ENCODE measurements at regions of chr5 and their contacts with region 1.

Region 1: GRCh38 chr5:14560091-14560595 is 21.4 kb upstream of the OTULINL start:
- DNase-seq: no peak
- ATAC-seq: no peak
- H3K4me3 ChIP-seq: no peak overlapping the region
- H3K27ac ChIP-seq: peak overlapping the region in 1 of 10 donors; percentile 1
- H3K4me1 ChIP-seq: peaks cover 0 to 28% (median 0%) of the 10 kb centered on the region in 9 donors
- H3K27me3 ChIP-seq: peaks cover 0 to 9% (median 0%) of the 10 kb centered on the region in 7 donors
- CTCF ChIP-seq: no peak

Region 2: DNA sequence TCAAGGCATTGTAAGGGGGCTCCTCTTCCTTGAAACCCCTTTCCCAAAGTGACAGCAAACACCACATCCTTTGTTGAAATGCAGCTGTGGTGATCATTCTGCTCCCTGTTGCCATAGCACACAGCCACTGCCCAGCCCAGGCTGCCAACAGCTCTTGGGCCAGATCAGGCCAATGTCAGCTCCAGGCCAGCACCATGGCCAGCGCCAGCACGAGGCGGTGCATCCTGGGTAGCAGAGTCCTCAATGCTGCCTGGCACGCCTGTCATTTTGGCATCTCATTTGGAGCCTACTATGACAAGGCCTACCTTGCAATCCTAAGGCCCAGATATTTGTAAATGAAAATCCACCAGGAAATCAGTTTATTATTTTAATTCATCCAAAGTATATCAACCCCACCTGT is 1006.2 kb before region 1 on chr5:
- intact Hi-C with region 1: no loop called
- DNase-seq: no peak
- ATAC-seq: no peak
- H3K4me3 ChIP-seq: no peak overlapping the region
- H3K27ac ChIP-seq: no peak overlapping the region
- H3K4me1 ChIP-seq: no peaks in the 10 kb centered on the region
- H3K27me3 ChIP-seq: no peaks in the 10 kb centered on the region
- CTCF ChIP-seq: no peak

Region 3: DNA sequence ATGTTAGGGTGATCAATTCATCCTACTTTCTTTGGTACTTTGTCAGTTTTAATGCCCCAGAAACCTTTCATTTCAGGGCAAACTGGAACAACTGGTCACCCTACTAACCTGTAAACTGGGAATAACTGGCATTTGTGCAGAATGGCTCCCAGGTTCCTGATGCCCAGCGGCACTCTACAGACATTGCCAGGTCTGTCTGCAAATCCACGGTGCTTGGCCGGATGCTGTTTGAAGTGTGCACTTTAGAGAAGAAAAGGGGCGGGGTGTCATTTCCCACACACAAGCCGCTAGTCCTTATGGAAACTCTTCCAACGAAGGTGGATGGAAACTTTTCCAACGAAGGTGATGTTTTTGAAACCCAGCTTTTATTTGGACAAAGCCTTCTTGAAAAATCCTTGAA is 28.5 kb before region 1 on chr5:
- intact Hi-C with region 1: loop called in 1 of 10 experiments (anchors 1 kb)
- DNase-seq: no peak
- ATAC-seq: no peak
- H3K4me3 ChIP-seq: no peak overlapping the region
- H3K27ac ChIP-seq: no peak overlapping the region
- H3K4me1 ChIP-seq: peaks cover 0 to 9% (median 5%) of the 10 kb centered on the region in 9 donors
- H3K27me3 ChIP-seq: no peaks in the 10 kb centered on the region
- CTCF ChIP-seq: no peak

Region 4: GRCh38 chr5:15031151-15031550 is 471.0 kb after region 1 on chr5:
- intact Hi-C with region 1: no loop called
- DNase-seq: peak in 1 of 2 donors; percentile 26
- ATAC-seq: peak in 5 of 8 donors; percentile 62 to 82 (median 75)
- H3K4me3 ChIP-seq: no peak overlapping the region
- H3K27ac ChIP-seq: peak overlapping the region in 6 of 10 donors; percentile 9 to 44 (median 26)
- H3K4me1 ChIP-seq: peaks cover 0 to 22% (median 0%) of the 10 kb centered on the region in 9 donors
- H3K27me3 ChIP-seq: peaks cover 0 to 4% (median 0%) of the 10 kb centered on the region in 7 donors
- CTCF ChIP-seq: no peak